ENCODE measurements at regions of chr10 and their contacts with region 1.

Region 1: GRCh38 chr10:104121520-104122224 is at the start of gene SFR1:
- DNase-seq: peak; percentile 97 to 99
- ATAC-seq: peak; percentile 87
- H3K4me3 ChIP-seq: peak within 1 kb of the TSS; percentile 64 to 86 (median 80)
- H3K27ac ChIP-seq: peak within 1 kb of the TSS; percentile 90 to 99 (median 94)
- H3K4me1 ChIP-seq: peaks cover 7% of the 10 kb centered on the region in 2 donors
- H3K27me3 ChIP-seq: no peaks in the 10 kb centered on the region
- CTCF ChIP-seq: peak; percentile 30 to 73 (median 59)
- POLR2A ChIP-seq: peak; percentile 64 to 84
- total RNA-seq, gene SFR1: 2.4 to 7.7 (median 4.7) TPM

Region 2: GRCh38 chr10:103888113-103888841 is 233.4 kb before region 1 on chr10:
- in situ Hi-C with region 1: loop called in 2 of 4 experiments (anchors 10 kb)
- intact Hi-C with region 1: loop called (anchors 2 kb)
- DNase-seq: peak; percentile 73 to 86
- ATAC-seq: peak; percentile 86 to 89
- H3K4me3 ChIP-seq: no peak overlapping the region
- H3K27ac ChIP-seq: peak overlapping the region; percentile 78 to 86 (median 82)
- H3K4me1 ChIP-seq: peaks cover 18 to 28% of the 10 kb centered on the region in 2 donors
- H3K27me3 ChIP-seq: no peaks in the 10 kb centered on the region
- CTCF ChIP-seq: peak; percentile 81 to 96 (median 83)
- POLR2A ChIP-seq: no peak

Region 3: GRCh38 chr10:103918053-103918846 is 203.4 kb before region 1 on chr10 and contains the start of gene STN1:
- in situ Hi-C with region 1: loop called in 1 of 4 experiments (anchors 25 kb)
- intact Hi-C with region 1: loop called (anchors 2 kb)
- DNase-seq: peak; percentile 98
- ATAC-seq: peak; percentile 90 to 92
- H3K4me3 ChIP-seq: peak within 1 kb of the TSS; percentile 85 to 95 (median 89)
- H3K27ac ChIP-seq: peak within 1 kb of the TSS; percentile 92 to 98 (median 96)
- H3K4me1 ChIP-seq: peaks cover 31 to 33% of the 10 kb centered on the region in 2 donors
- H3K27me3 ChIP-seq: no peaks in the 10 kb centered on the region
- CTCF ChIP-seq: peak in 1 of 5 experiments; percentile 12
- POLR2A ChIP-seq: peak; percentile 96 to 97
- total RNA-seq, gene STN1: 15.1 to 24.7 (median 20.5) TPM

Region 4: DNA sequence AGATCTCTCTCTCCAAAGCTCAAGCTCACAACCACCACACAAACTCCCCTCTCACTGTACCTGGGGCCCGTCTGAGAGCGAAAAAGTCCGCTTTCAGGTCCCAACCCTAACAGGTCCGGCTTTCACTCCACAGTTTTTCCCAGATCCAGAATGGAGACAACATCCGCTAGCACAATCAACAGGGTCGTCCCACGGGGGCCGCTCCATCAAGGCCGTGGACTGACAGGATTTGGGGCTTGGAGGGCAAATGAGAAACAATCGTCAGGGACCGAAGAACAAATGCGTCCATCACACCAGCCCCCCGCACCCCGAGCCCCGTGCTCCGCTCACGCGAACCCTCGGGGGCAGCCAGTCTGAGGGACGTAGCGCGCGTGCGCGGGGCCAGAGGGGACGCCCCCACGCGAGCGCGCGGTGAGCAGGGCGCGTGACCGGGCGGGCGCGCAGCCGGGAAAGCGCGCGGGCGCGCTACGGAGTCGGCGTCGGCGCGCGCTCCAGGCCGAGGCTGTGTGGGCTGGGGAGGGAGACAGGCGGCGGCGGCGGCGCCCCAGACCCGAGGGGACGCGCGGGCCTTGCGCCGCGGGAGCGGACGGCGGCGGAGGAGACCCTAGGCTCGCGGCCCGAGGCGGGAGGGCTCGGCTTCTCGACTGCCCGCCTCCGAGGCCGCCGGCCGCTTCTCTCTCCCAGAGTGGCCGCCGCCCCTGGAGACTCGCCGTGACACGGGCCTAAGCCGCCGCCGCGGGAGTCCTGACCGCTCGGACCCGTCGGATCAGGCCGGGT is 154.8 kb before region 1 on chr10 and contains the start of gene SLK:
- in situ Hi-C with region 1: loop called in 1 of 4 experiments (anchors 10 kb)
- intact Hi-C with region 1: loop called (anchors 1 kb)
- DNase-seq: peak; percentile 68 to 80
- ATAC-seq: peak; percentile 88 to 91
- H3K4me3 ChIP-seq: peak within 1 kb of the TSS; percentile 71 to 97 (median 82)
- H3K27ac ChIP-seq: peak within 1 kb of the TSS; percentile 89 to 99 (median 92)
- H3K4me1 ChIP-seq: peaks cover 32 to 34% of the 10 kb centered on the region in 2 donors
- H3K27me3 ChIP-seq: no peaks in the 10 kb centered on the region
- CTCF ChIP-seq: peak in 1 of 5 experiments; percentile 20
- POLR2A ChIP-seq: peak; percentile 98
- total RNA-seq, gene SLK: 43.3 to 53.3 (median 49.8) TPM

Region 5: DNA sequence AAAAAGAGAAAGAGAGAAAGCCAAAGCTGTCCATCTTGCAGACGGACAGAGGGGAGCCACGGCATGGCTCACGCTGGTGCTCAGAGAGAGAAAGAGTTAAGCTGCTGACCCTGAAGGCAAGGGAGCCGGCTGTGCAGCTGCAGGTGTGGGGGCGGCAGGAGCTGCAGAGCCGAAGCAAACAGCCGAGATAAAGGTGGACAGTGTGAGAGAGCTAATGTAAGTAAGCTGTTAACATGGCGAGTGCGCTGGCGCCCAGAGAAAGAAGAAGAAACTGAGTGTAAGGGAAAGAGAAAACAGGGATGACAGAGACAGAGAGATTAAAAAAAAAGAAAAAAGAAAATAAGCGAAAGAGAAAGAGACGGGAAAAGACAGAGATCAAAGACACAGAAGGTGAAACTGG is 54.1 kb before region 1 on chr10:
- in situ Hi-C with region 1: no loop called
- intact Hi-C with region 1: no loop called
- DNase-seq: no peak
- ATAC-seq: no peak
- H3K4me3 ChIP-seq: no peak overlapping the region
- H3K27ac ChIP-seq: no peak overlapping the region
- H3K4me1 ChIP-seq: no peaks in the 10 kb centered on the region
- H3K27me3 ChIP-seq: no peaks in the 10 kb centered on the region
- CTCF ChIP-seq: no peak
- POLR2A ChIP-seq: no peak

Region 6: GRCh38 chr10:104353325-104354048 is 231.8 kb after region 1 on chr10 and contains the start of gene CFAP58:
- in situ Hi-C with region 1: no loop called
- intact Hi-C with region 1: loop called (anchors 2 kb)
- DNase-seq: peak; percentile 85 to 92
- ATAC-seq: peak; percentile 92
- H3K4me3 ChIP-seq: peak within 1 kb of the TSS; percentile 38 to 60 (median 54)
- H3K27ac ChIP-seq: peak within 1 kb of the TSS in 1 of 4 donors; percentile 20
- H3K4me1 ChIP-seq: peaks cover 11 to 22% of the 10 kb centered on the region in 2 donors
- H3K27me3 ChIP-seq: no peaks in the 10 kb centered on the region
- CTCF ChIP-seq: peak; percentile 71 to 88 (median 81)
- POLR2A ChIP-seq: no peak
- total RNA-seq, gene CFAP58: 0.13 to 0.36 (median 0.27) TPM in 3 of 4 donors, not detected in the other